Activated naive CD4-positive, alpha-beta T cell treated with anti-CD3 and anti-CD28 coated beads for 36 hours (primary cell): ENCODE measurements at regions of chr10 and their contacts with region 1.

Region 1: GRCh38 chr10:9091530-9092093 is 1037.1 kb downstream of the GATA3 start:
- DNase-seq: peak; percentile 23
- H3K4me3 Mint-ChIP-seq: no peak overlapping the region
- H3K27ac Mint-ChIP-seq: no peak overlapping the region
- H3K4me1 Mint-ChIP-seq: peaks cover 21% of the 10 kb centered on the region
- H3K27me3 Mint-ChIP-seq: peaks cover 2% of the 10 kb centered on the region

Region 2: DNA sequence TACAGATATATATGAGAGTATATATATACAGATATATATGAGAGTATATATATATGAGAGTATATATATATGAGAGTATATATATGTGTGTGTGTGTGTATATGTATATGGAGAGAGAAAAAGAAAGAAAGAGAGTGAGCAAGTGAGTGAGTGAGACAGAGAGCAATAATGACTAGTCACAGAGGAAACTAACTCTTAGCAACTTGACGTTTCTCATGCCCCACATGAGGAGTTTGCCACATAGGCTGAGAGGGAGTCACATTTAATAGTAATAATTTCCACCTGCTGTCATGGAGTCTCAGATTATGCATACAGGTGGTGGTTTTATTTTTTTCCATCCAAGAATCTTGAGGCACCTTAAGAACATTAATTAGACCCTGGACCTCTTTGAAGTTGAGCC is 837.3 kb before region 1 on chr10:
- CTCF ChIA-PET with region 1: no interaction called
- intact Hi-C with region 1: loop called (anchors 5 kb)
- DNase-seq: peak; percentile 40
- H3K4me3 Mint-ChIP-seq: no peak overlapping the region
- H3K27ac Mint-ChIP-seq: peak overlapping the region; percentile 73
- H3K4me1 Mint-ChIP-seq: peaks cover 23% of the 10 kb centered on the region
- H3K27me3 Mint-ChIP-seq: no peaks in the 10 kb centered on the region

Region 3: GRCh38 chr10:8990280-8990987 is 101.2 kb before region 1 on chr10:
- CTCF ChIA-PET with region 1: no interaction called
- intact Hi-C with region 1: loop called (anchors 2 kb)
- DNase-seq: no peak
- H3K4me3 Mint-ChIP-seq: no peak overlapping the region
- H3K27ac Mint-ChIP-seq: no peak overlapping the region
- H3K4me1 Mint-ChIP-seq: peaks cover 17% of the 10 kb centered on the region
- H3K27me3 Mint-ChIP-seq: no peaks in the 10 kb centered on the region

Region 4: GRCh38 chr10:9024210-9024609 is 67.4 kb before region 1 on chr10:
- CTCF ChIA-PET with region 1: no interaction called
- intact Hi-C with region 1: loop called (anchors 2 kb)
- DNase-seq: no peak
- H3K4me3 Mint-ChIP-seq: no peak overlapping the region
- H3K27ac Mint-ChIP-seq: no peak overlapping the region
- H3K4me1 Mint-ChIP-seq: peaks cover 7% of the 10 kb centered on the region
- H3K27me3 Mint-ChIP-seq: peaks cover 9% of the 10 kb centered on the region

Region 5: GRCh38 chr10:9149147-9149895 is 57.7 kb after region 1 on chr10:
- CTCF ChIA-PET with region 1: no interaction called
- intact Hi-C with region 1: no loop called
- DNase-seq: no peak
- H3K4me3 Mint-ChIP-seq: no peak overlapping the region
- H3K27ac Mint-ChIP-seq: no peak overlapping the region
- H3K4me1 Mint-ChIP-seq: no peaks in the 10 kb centered on the region
- H3K27me3 Mint-ChIP-seq: no peaks in the 10 kb centered on the region

Region 6: GRCh38 chr10:9175200-9175599 is 83.6 kb after region 1 on chr10:
- CTCF ChIA-PET with region 1: no interaction called
- intact Hi-C with region 1: loop called (anchors 1 kb)
- DNase-seq: no peak
- H3K4me3 Mint-ChIP-seq: no peak overlapping the region
- H3K27ac Mint-ChIP-seq: no peak overlapping the region
- H3K4me1 Mint-ChIP-seq: peaks cover 13% of the 10 kb centered on the region
- H3K27me3 Mint-ChIP-seq: peaks cover 4% of the 10 kb centered on the region